Naive thymus-derived CD4-positive, alpha-beta T cell (primary cell): ENCODE measurements at regions of chr2 and their contacts with region 1.

Region 1: GRCh38 chr2:190069936-190070696 is 7.6 kb upstream of the MSTN start:
- DNase-seq: peak in 6 of 9 donors; percentile 20 to 50 (median 32)
- ATAC-seq: peak; percentile 64
- H3K4me3 ChIP-seq: no peak overlapping the region
- H3K4me3 Mint-ChIP-seq: no peak overlapping the region
- H3K27ac ChIP-seq: no peak overlapping the region
- H3K27ac Mint-ChIP-seq: no peak overlapping the region
- H3K4me1 ChIP-seq: no peaks in the 10 kb centered on the region
- H3K4me1 Mint-ChIP-seq: no peaks in the 10 kb centered on the region
- H3K27me3 ChIP-seq: no peaks in the 10 kb centered on the region
- H3K27me3 Mint-ChIP-seq: peaks cover 0 to 8% (median 0%) of the 10 kb centered on the region in 5 donors

Region 2: DNA sequence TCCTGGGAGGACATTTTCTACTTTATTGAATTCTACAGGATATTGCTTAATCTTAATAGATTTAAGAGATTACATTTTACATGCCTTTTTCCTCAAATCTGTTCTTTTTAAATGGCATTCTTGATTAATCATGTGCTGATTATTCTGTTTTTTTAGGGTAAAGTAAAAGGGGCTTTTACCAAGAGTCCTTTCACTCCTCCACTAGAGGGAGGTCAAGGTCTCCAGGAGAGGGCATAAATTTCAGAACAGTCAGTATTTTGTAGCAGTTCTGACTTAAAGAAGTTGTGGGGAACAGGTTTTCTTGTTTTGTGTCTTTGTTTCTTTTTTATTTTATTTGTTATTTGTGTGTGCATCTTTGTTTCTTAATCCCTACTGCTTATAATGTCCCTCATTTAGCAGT is 603.5 kb before region 1 on chr2:
- CTCF ChIA-PET with region 1: no interaction called
- POLR2A ChIA-PET with region 1: no interaction called
- intact Hi-C with region 1: loop called in 1 of 2 experiments (anchors 2 kb)
- DNase-seq: peak in 6 of 9 donors; percentile 4 to 34 (median 20)
- ATAC-seq: peak; percentile 60
- H3K4me3 ChIP-seq: no peak overlapping the region
- H3K4me3 Mint-ChIP-seq: no peak overlapping the region
- H3K27ac ChIP-seq: no peak overlapping the region
- H3K27ac Mint-ChIP-seq: peak overlapping the region in 5 of 9 donors; percentile 12 to 59 (median 32)
- H3K4me1 ChIP-seq: no peaks in the 10 kb centered on the region
- H3K4me1 Mint-ChIP-seq: peaks cover 0 to 5% (median 0%) of the 10 kb centered on the region in 7 donors
- H3K27me3 ChIP-seq: no peaks in the 10 kb centered on the region
- H3K27me3 Mint-ChIP-seq: no peaks in the 10 kb centered on the region

Region 3: DNA sequence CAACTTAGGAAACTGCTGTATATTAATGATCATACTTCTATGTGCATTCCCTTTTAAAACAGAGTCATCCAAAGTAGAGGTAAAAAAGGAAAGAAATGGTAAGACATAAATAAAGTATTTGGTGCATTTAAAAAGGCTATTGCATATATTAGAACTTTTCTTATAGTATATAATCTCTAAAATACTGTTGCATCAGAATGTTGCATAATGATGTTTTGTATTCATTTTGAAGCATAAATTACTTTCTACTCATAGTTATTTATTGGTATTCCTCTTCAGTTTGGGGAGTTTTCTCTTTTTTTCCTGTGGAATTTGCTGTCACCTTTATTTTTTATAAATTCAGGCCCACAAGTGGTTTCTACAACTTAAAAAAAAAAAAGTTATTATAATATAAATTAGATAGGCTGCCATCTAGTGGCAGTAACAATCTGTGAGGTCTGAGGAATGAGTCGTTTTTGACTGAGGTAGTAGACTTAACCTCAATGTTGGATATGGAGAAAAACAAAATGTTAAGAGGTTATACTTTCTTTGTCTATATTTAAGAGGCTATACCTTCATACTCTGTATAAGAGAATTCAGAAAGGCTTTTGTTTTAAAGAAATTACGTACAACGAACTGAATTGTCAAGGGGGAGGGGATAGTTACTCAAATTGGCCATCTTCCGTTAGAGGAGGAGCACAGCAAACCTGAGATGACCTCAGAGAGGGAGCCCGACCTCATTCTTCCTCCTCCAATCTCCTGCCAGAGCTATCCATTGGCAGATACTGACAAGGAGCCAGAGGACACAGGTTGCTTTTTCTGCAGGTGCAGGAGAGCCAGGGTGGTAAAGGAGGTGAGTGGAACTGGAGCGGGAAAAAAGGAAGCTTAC is 371.9 kb before region 1 on chr2:
- CTCF ChIA-PET with region 1: no interaction called
- POLR2A ChIA-PET with region 1: no interaction called
- intact Hi-C with region 1: loop called in 1 of 2 experiments (anchors 1 kb)
- DNase-seq: peak in 7 of 9 donors; percentile 25 to 55 (median 51)
- ATAC-seq: peak; percentile 84
- H3K4me3 ChIP-seq: no peak overlapping the region
- H3K4me3 Mint-ChIP-seq: peak overlapping the region in 6 of 10 donors; percentile 2 to 44 (median 21)
- H3K27ac ChIP-seq: no peak overlapping the region
- H3K27ac Mint-ChIP-seq: peak overlapping the region in 4 of 9 donors; percentile 15 to 72 (median 49)
- H3K4me1 ChIP-seq: no peaks in the 10 kb centered on the region
- H3K4me1 Mint-ChIP-seq: peaks cover 0 to 8% (median 4%) of the 10 kb centered on the region in 7 donors
- H3K27me3 ChIP-seq: no peaks in the 10 kb centered on the region
- H3K27me3 Mint-ChIP-seq: no peaks in the 10 kb centered on the region

Region 4: DNA sequence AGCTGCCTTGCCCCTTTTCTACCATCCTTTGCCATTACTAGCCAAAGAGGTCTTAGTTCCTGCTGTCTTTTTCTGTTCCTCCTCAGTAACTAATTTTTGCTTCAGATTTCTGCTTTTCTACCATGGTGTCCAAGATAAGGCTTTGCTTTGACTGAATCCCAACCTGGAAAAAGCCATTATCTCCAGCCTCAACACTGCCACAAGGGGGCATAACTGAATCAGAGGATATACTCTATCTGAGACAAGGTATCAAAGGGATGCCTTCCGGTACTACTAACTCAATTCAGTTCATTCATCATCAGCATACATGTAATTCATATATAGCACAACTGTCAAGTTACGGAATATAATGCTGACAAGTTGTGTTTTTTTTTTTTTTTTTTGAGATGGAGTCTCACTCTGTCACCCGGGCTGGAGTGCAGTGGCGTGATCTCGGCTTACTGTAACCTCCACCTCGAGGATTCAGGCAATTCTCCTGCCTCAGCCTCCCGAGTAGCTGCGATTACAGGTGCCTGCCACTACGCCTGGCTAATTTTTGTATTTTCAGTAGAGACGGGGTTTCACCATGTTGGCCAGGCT is 318.9 kb before region 1 on chr2:
- CTCF ChIA-PET with region 1: interaction called, 6 read pairs
- POLR2A ChIA-PET with region 1: no interaction called
- intact Hi-C with region 1: loop called in 1 of 2 experiments (anchors 1 kb)
- DNase-seq: peak in 7 of 9 donors; percentile 26 to 63 (median 49)
- ATAC-seq: peak; percentile 87
- H3K4me3 ChIP-seq: no peak overlapping the region
- H3K4me3 Mint-ChIP-seq: no peak overlapping the region
- H3K27ac ChIP-seq: no peak overlapping the region
- H3K27ac Mint-ChIP-seq: peak overlapping the region in 1 of 9 donors; percentile 1
- H3K4me1 ChIP-seq: no peaks in the 10 kb centered on the region
- H3K4me1 Mint-ChIP-seq: peaks cover 0 to 4% (median 0%) of the 10 kb centered on the region in 7 donors
- H3K27me3 ChIP-seq: no peaks in the 10 kb centered on the region
- H3K27me3 Mint-ChIP-seq: no peaks in the 10 kb centered on the region

Region 5: DNA sequence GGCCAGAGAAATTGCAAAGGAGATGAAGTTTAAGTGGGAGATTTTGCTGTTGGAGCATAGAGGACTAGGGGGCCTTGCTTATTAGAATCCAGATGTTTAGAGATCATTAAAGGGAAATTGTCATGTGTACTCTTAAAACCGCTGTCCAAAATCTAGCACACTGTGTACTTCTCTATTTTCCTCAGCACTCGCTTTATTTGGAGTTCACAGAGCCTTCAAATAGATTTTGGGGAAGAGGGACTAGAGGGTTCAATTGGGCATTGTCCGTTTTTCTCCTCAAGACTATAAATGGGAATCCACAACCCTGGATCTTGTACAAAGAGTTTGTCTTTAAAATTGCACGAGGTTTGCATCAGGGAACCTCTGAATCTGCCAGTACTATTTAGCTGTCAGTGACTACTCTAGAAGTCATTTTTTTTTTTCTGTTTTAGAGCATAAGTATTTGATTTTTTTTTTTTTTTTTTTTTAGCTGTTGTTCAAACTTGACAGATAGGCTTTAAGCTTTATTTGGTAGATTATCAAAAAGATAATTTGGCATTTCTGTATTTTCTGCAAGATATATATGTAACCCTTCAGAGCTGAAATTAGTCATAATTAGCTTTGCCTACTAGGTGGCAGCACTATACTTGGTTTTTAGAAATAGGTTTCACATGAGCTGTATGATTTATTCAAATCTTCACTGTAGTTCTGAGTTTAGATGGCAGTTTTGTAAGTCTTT is 271.6 kb before region 1 on chr2:
- CTCF ChIA-PET with region 1: no interaction called
- POLR2A ChIA-PET with region 1: no interaction called
- intact Hi-C with region 1: loop called in 1 of 2 experiments (anchors 2 kb)
- DNase-seq: no peak
- ATAC-seq: peak; percentile 62
- H3K4me3 ChIP-seq: no peak overlapping the region
- H3K4me3 Mint-ChIP-seq: no peak overlapping the region
- H3K27ac ChIP-seq: no peak overlapping the region
- H3K27ac Mint-ChIP-seq: no peak overlapping the region
- H3K4me1 ChIP-seq: no peaks in the 10 kb centered on the region
- H3K4me1 Mint-ChIP-seq: peaks cover 0 to 8% (median 0%) of the 10 kb centered on the region in 7 donors
- H3K27me3 ChIP-seq: no peaks in the 10 kb centered on the region
- H3K27me3 Mint-ChIP-seq: no peaks in the 10 kb centered on the region